ENCODE measurements at regions of chr15 and their contacts with region 1.

Region 1: GRCh38 chr15:35078221-35078915 is 6.7 kb downstream of the NANOGP8 start:
- DNase-seq: peak; percentile 52
- H3K4me3 Mint-ChIP-seq: no peak overlapping the region
- H3K27ac Mint-ChIP-seq: no peak overlapping the region
- H3K4me1 Mint-ChIP-seq: no peaks in the 10 kb centered on the region
- H3K27me3 Mint-ChIP-seq: no peaks in the 10 kb centered on the region
- CTCF ChIP-seq: peak; percentile 81

Region 2: DNA sequence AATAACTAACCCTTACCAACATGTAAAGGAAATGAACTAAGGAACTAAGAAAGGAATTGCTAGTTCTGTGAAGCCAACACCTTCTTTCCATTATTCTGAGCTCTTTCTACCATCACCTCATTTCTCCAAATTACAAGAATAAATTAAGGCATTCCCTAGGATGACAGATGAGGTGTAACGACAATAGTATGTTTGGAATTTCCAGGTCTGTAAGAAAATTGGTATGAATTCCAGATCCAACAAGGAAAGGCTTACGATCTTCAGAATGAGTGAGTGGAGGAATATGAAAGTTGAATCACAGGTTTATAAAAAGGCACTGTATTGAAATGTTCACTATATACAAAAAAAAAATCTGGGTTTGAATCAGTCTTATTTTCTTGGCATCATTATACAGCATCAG is 11.2 kb after region 1 on chr15:
- CTCF ChIA-PET with region 1: interaction called, 46 read pairs
- POLR2A ChIA-PET with region 1: no interaction called
- intact Hi-C with region 1: no loop called
- DNase-seq: no peak
- H3K4me3 Mint-ChIP-seq: no peak overlapping the region
- H3K27ac Mint-ChIP-seq: no peak overlapping the region
- H3K4me1 Mint-ChIP-seq: no peaks in the 10 kb centered on the region
- H3K27me3 Mint-ChIP-seq: no peaks in the 10 kb centered on the region
- CTCF ChIP-seq: no peak

Region 3: GRCh38 chr15:35206060-35206675 is 127.8 kb after region 1 on chr15:
- CTCF ChIA-PET with region 1: no interaction called
- POLR2A ChIA-PET with region 1: no interaction called
- intact Hi-C with region 1: loop called (anchors 10 kb)
- DNase-seq: peak; percentile 59
- H3K4me3 Mint-ChIP-seq: no peak overlapping the region
- H3K27ac Mint-ChIP-seq: no peak overlapping the region
- H3K4me1 Mint-ChIP-seq: no peaks in the 10 kb centered on the region
- H3K27me3 Mint-ChIP-seq: no peaks in the 10 kb centered on the region
- CTCF ChIP-seq: peak; percentile 39

Region 4: GRCh38 chr15:35281515-35281914 is 203.1 kb after region 1 on chr15:
- CTCF ChIA-PET with region 1: interaction called, 13 read pairs
- POLR2A ChIA-PET with region 1: no interaction called
- intact Hi-C with region 1: no loop called
- DNase-seq: no peak
- H3K4me3 Mint-ChIP-seq: no peak overlapping the region
- H3K27ac Mint-ChIP-seq: no peak overlapping the region
- H3K4me1 Mint-ChIP-seq: no peaks in the 10 kb centered on the region
- H3K27me3 Mint-ChIP-seq: no peaks in the 10 kb centered on the region
- CTCF ChIP-seq: no peak

Region 5: DNA sequence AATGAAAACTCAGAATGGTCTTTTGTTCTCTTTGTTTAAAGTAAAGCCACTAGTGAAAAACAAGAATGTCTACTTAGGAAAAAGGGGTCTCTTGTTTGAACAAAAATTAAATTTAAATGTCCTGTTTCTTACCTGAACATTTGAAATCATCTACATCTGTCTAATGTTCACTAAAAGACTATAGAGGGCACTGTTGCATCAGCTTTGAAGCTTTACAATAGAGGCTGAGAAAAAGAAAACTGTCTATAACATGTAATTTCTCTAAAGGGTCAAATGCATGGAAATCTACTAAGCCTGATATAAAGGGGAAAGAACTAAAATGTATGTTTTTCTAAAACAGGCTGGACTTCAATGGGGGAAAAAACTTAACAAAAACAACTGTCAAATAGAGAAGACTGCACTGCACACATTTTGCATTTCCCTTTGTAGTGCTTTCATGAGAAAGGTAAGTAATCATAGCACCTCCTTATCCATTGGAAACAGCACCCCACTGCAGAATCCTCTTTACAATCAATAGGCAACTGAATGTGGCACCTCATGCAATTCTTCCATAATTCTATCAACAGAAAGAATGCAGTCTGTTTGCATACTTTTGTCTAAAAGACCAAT is 441.3 kb after region 1 on chr15:
- CTCF ChIA-PET with region 1: interaction called, 3 read pairs
- POLR2A ChIA-PET with region 1: no interaction called
- intact Hi-C with region 1: loop called (anchors 10 kb)
- DNase-seq: peak; percentile 64
- H3K4me3 Mint-ChIP-seq: no peak overlapping the region
- H3K27ac Mint-ChIP-seq: no peak overlapping the region
- H3K4me1 Mint-ChIP-seq: peaks cover 6% of the 10 kb centered on the region
- H3K27me3 Mint-ChIP-seq: no peaks in the 10 kb centered on the region
- CTCF ChIP-seq: peak; percentile 53

Region 6: DNA sequence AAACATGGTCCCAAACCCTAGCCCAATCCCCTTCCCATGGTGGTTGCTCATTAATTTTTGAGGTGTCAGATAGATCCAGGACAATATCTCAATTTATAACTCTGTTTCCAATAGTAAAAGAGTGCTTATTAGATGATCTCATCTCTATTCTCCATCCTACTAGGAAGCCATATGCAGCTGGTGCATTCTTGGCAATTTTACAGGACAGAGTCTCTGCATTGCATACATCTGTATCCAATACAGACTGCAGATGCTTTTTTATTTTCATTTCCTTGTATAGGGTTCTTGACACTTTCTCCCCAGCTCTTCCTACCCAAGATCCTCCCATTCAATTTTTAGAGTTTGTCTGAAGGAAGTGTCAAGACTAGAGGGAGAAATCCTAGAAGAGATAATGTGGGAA is 662.4 kb after region 1 on chr15:
- CTCF ChIA-PET with region 1: interaction called, 3 read pairs
- POLR2A ChIA-PET with region 1: no interaction called
- intact Hi-C with region 1: loop called (anchors 10 kb)
- DNase-seq: no peak
- H3K4me3 Mint-ChIP-seq: no peak overlapping the region
- H3K27ac Mint-ChIP-seq: no peak overlapping the region
- H3K4me1 Mint-ChIP-seq: peaks cover 7% of the 10 kb centered on the region
- H3K27me3 Mint-ChIP-seq: no peaks in the 10 kb centered on the region
- CTCF ChIP-seq: no peak

Region 7: DNA sequence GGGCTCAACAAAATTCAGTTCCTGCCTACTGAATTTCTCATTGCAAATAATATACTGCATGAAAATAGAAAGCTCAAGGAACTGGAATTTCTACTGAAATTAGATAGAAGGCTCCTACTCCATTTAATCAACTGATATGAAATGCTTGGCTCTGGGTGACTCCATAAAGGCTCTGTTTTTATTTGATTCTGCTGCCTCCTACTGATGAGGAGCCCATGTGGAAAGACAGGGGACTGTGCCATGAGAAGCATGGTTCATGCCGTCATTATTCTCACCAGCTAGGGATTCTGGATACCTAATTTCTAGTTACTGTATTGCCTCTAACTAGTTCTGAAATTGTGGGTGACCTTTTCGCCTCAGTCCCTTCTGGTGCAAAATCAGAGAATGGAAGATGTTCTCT is 833.8 kb after region 1 on chr15:
- CTCF ChIA-PET with region 1: interaction called, 5 read pairs
- POLR2A ChIA-PET with region 1: no interaction called
- intact Hi-C with region 1: loop called (anchors 1 kb)
- DNase-seq: peak; percentile 28
- H3K4me3 Mint-ChIP-seq: no peak overlapping the region
- H3K27ac Mint-ChIP-seq: no peak overlapping the region
- H3K4me1 Mint-ChIP-seq: no peaks in the 10 kb centered on the region
- H3K27me3 Mint-ChIP-seq: no peaks in the 10 kb centered on the region
- CTCF ChIP-seq: peak; percentile 31

Measured in MCF 10A (cell line).